Activated naive CD4-positive, alpha-beta T cell treated with anti-CD3 and anti-CD28 coated beads for 36 hours (primary cell): ENCODE measurements at regions of chr2 and their contacts with region 1.

Region 1: GRCh38 chr2:96407041-96407918 is 71.7 kb downstream of the NCAPH start:
- DNase-seq: peak; percentile 81
- H3K4me3 Mint-ChIP-seq: no peak overlapping the region
- H3K27ac Mint-ChIP-seq: peak overlapping the region; percentile 71
- H3K4me1 Mint-ChIP-seq: peaks cover 27% of the 10 kb centered on the region
- H3K27me3 Mint-ChIP-seq: no peaks in the 10 kb centered on the region

Region 2: GRCh38 chr2:96427917-96428316 is 20.6 kb after region 1 on chr2:
- CTCF ChIA-PET with region 1: interaction called, 20 read pairs
- intact Hi-C with region 1: no loop called
- DNase-seq: peak; percentile 61
- H3K4me3 Mint-ChIP-seq: no peak overlapping the region
- H3K27ac Mint-ChIP-seq: no peak overlapping the region
- H3K4me1 Mint-ChIP-seq: peaks cover 9% of the 10 kb centered on the region
- H3K27me3 Mint-ChIP-seq: peaks cover 8% of the 10 kb centered on the region

Region 3: GRCh38 chr2:96495982-96496629 is 88.8 kb after region 1 on chr2:
- CTCF ChIA-PET with region 1: interaction called, 11 read pairs
- intact Hi-C with region 1: no loop called
- DNase-seq: no peak
- H3K4me3 Mint-ChIP-seq: no peak overlapping the region
- H3K27ac Mint-ChIP-seq: peak overlapping the region; percentile 46
- H3K4me1 Mint-ChIP-seq: peaks cover 34% of the 10 kb centered on the region
- H3K27me3 Mint-ChIP-seq: no peaks in the 10 kb centered on the region

Region 4: DNA sequence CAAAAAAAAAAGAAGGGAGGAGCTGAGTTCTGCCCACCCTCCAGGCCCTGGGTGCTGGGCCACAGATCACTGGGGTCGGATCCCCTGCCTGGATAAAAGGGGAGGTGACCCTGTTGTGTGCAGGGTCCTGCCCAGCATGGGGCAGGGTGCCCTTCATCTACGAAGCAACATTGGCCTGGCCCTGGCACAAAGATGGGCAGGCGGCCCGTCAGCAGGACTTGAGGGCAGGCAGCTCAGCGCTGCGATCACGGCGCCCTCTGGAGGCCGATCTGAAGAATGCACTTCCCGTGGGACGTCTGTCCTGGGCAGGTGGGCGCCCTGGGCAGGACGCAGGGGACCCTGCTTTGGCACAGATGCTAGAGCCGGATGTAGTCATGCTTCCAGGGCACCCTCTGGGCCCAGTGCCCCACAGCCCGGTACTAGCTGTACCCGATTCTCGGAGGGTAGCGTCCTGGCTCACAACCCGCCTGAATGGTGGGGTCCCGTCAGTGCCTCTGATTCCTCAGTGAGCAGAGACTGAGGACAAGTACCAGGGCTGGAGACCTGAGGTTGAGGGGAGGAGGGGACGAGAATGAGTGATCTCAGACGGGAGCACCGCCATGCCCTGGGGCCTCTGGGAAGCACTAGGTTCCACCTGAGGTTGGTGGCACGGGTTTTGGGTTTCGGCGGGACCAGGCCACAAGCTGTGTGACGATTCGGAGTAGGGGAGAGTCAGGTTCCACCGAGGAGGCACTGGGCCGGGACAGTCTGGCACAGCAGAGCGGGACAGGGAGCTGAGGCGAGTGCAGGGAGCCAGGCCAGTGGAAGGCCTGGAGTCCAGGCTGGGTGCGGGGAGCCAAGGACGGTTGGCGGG is 147.2 kb after region 1 on chr2:
- CTCF ChIA-PET with region 1: interaction called, 20 read pairs
- intact Hi-C with region 1: loop called (anchors 1 kb)
- DNase-seq: peak; percentile 73
- H3K4me3 Mint-ChIP-seq: peak overlapping the region; percentile 52
- H3K27ac Mint-ChIP-seq: peak overlapping the region; percentile 88
- H3K4me1 Mint-ChIP-seq: peaks cover 34% of the 10 kb centered on the region
- H3K27me3 Mint-ChIP-seq: no peaks in the 10 kb centered on the region